Motor neuron (in vitro differentiated cells): ENCODE measurements at regions of chr13 and their contacts with region 1.

Region 1: GRCh38 chr13:78045916-78046315 is 127.3 kb upstream of the EDNRB start:
- ATAC-seq: peak in 3 of 8 experiments; percentile 6 to 18 (median 16)
- H3K4me3 ChIP-seq: no peak overlapping the region
- H3K27ac ChIP-seq: no peak overlapping the region
- H3K4me1 ChIP-seq: peaks cover 7 to 10% of the 10 kb centered on the region in 2 donors

Region 2: GRCh38 chr13:77928909-77929308 is 117.0 kb before region 1 on chr13:
- in situ Hi-C with region 1: loop called in 1 of 9 experiments (anchors 25 kb)
- ATAC-seq: no peak
- H3K4me3 ChIP-seq: no peak overlapping the region
- H3K27ac ChIP-seq: no peak overlapping the region
- H3K4me1 ChIP-seq: no peaks in the 10 kb centered on the region

Region 3: GRCh38 chr13:78540058-78540457 is 494.1 kb after region 1 on chr13:
- in situ Hi-C with region 1: no loop called
- ATAC-seq: peak in 4 of 8 experiments; percentile 45 to 65 (median 60)
- H3K4me3 ChIP-seq: no peak overlapping the region
- H3K27ac ChIP-seq: no peak overlapping the region
- H3K4me1 ChIP-seq: peaks cover 4% of the 10 kb centered on the region in 2 donors